K562 (cell line): ENCODE measurements at regions of chr5 and their contacts with region 1.

Region 1: GRCh38 chr5:140575309-140575708 is 10.7 kb downstream of the SLC35A4 start:
- DNase-seq: peak in 3 of 4 experiments; percentile 42 to 70 (median 61)
- ATAC-seq: peak; percentile 92
- H3K4me3 ChIP-seq: no peak overlapping the region
- H3K27ac ChIP-seq: no peak overlapping the region
- H3K4me1 ChIP-seq: peaks cover 8 to 10% of the 10 kb centered on the region in 2 experiments; a peak in 3 of 5 replicates
- H3K27me3 ChIP-seq: no peaks in the 10 kb centered on the region
- CTCF ChIP-seq: peak; percentile 74 to 95 (median 82)
- EP300 ChIP-seq: no peak
- POLR2A ChIP-seq: no peak
- RAD21 ChIP-seq: peak; percentile 36 to 86; a peak in 3 of 4 replicates

Region 2: GRCh38 chr5:139371482-139372435 is 1203.5 kb before region 1 on chr5:
- CTCF ChIA-PET with region 1: no interaction called
- POLR2A ChIA-PET with region 1: no interaction called
- in situ Hi-C with region 1: no loop called
- intact Hi-C with region 1: no loop called
- DNase-seq: no peak
- ATAC-seq: no peak
- H3K4me3 ChIP-seq: no peak overlapping the region
- H3K27ac ChIP-seq: no peak overlapping the region
- H3K4me1 ChIP-seq: no peaks in the 10 kb centered on the region
- H3K27me3 ChIP-seq: no peaks in the 10 kb centered on the region
- CTCF ChIP-seq: no peak
- EP300 ChIP-seq: no peak
- POLR2A ChIP-seq: no peak
- RAD21 ChIP-seq: no peak

Region 3: DNA sequence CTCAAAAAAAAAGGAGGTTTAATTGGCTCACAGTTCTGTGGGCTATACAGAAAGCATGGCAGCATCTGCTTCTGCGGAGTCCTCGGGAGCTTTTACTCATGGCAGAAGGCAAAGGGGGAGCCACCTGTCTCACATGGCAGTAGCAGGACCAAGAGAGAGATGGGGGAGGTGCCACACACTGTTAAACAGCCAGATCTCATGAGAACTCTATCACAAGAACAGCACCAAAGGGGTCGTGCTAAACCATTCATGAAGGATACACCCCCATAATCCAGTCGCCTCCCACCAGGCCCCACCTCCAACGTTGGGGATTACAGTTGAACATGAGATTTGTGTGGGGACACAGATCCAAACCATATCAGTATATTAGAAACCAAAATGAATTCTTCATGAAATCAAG is 955.4 kb before region 1 on chr5:
- CTCF ChIA-PET with region 1: no interaction called
- POLR2A ChIA-PET with region 1: no interaction called
- in situ Hi-C with region 1: no loop called
- intact Hi-C with region 1: no loop called
- DNase-seq: no peak
- ATAC-seq: no peak
- H3K4me3 ChIP-seq: no peak overlapping the region
- H3K27ac ChIP-seq: no peak overlapping the region
- H3K4me1 ChIP-seq: no peaks in the 10 kb centered on the region
- H3K27me3 ChIP-seq: no peaks in the 10 kb centered on the region
- CTCF ChIP-seq: no peak
- EP300 ChIP-seq: no peak
- POLR2A ChIP-seq: no peak
- RAD21 ChIP-seq: no peak

Region 4: GRCh38 chr5:140564196-140565023 is 10.9 kb before region 1 on chr5 and contains the starts of genes APBB3 and SLC35A4:
- CTCF ChIA-PET with region 1: no interaction called
- POLR2A ChIA-PET with region 1: interaction called, 12 read pairs
- in situ Hi-C with region 1: no loop called
- intact Hi-C with region 1: no loop called
- DNase-seq: peak; percentile 92 to 99 (median 94)
- ATAC-seq: peak; percentile 94
- H3K4me3 ChIP-seq: peak within 1 kb of the TSS; percentile 75
- H3K27ac ChIP-seq: peak within 1 kb of the TSS; percentile 98
- H3K4me1 ChIP-seq: peaks cover 26 to 40% of the 10 kb centered on the region in 2 experiments
- H3K27me3 ChIP-seq: no peaks in the 10 kb centered on the region
- CTCF ChIP-seq: 0 out of 6 replicates have a peak, but pooled peaks of 1 of the 3 experiments have one; percentile 12
- EP300 ChIP-seq: peak; percentile 58
- POLR2A ChIP-seq: peak; percentile 93
- RAD21 ChIP-seq: 0 out of 4 replicates have a peak, but pooled peaks of 1 of the 2 experiments have one; percentile 12
- polyA plus RNA-seq, gene APBB3: 0.17 to 0.67 TPM
- polyA plus RNA-seq, gene SLC35A4: 30.0 to 42.5 TPM

Region 5: DNA sequence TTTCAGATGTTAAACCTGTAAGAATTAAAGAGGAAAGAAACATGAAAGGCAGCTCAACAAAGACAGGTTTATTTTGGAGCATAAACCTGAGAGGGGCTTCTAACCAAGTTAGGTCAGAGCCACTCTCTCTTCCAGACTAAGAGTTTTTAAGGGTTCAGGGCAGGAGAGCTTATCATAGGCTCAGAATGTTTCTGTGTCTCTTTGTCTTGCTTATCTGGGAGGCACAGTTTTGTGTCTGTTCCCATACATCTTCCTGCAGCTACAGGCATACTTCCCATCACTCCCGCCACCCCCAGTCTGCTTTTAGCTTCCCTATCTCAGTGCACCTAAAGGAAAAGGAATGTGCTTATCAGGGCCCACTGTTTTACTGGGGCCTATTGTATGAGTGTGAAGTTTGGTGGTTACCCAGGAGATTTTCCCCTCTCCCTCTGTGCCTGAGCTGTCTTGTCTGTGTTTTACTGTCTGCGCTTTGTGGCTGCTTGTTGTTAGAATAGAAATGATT is 35.8 kb after region 1 on chr5:
- CTCF ChIA-PET with region 1: no interaction called
- POLR2A ChIA-PET with region 1: no interaction called
- in situ Hi-C with region 1: no loop called
- intact Hi-C with region 1: loop called (anchors 1 kb)
- DNase-seq: peak; percentile 57 to 90 (median 69)
- ATAC-seq: peak; percentile 94
- H3K4me3 ChIP-seq: no peak overlapping the region
- H3K27ac ChIP-seq: peak overlapping the region; percentile 9; the same call in 1 of the 3 replicates
- H3K4me1 ChIP-seq: peaks cover 7 to 8% of the 10 kb centered on the region in 2 experiments; a peak in 3 of 5 replicates
- H3K27me3 ChIP-seq: no peaks in the 10 kb centered on the region
- CTCF ChIP-seq: no peak
- EP300 ChIP-seq: peak; percentile 84
- POLR2A ChIP-seq: no peak
- RAD21 ChIP-seq: peak in 1 of 2 experiments; percentile 36; a peak in 2 of 4 replicates

Region 6: GRCh38 chr5:140700177-140701144 is 125.2 kb after region 1 on chr5 and contains the start of gene ZMAT2:
- CTCF ChIA-PET with region 1: no interaction called
- POLR2A ChIA-PET with region 1: no interaction called
- in situ Hi-C with region 1: no loop called
- intact Hi-C with region 1: no loop called
- DNase-seq: peak; percentile 94 to 97 (median 94)
- ATAC-seq: peak; percentile 99
- H3K4me3 ChIP-seq: peak within 1 kb of the TSS; percentile 87
- H3K27ac ChIP-seq: peak within 1 kb of the TSS; percentile 78
- H3K4me1 ChIP-seq: peaks cover 0 to 8% of the 10 kb centered on the region in 2 experiments; a peak in 2 of 5 replicates
- H3K27me3 ChIP-seq: no peaks in the 10 kb centered on the region
- CTCF ChIP-seq: no peak
- EP300 ChIP-seq: no peak
- POLR2A ChIP-seq: peak; percentile 93
- RAD21 ChIP-seq: no peak
- polyA plus RNA-seq, gene ZMAT2: 44.2 to 45.0 TPM

Region 7: DNA sequence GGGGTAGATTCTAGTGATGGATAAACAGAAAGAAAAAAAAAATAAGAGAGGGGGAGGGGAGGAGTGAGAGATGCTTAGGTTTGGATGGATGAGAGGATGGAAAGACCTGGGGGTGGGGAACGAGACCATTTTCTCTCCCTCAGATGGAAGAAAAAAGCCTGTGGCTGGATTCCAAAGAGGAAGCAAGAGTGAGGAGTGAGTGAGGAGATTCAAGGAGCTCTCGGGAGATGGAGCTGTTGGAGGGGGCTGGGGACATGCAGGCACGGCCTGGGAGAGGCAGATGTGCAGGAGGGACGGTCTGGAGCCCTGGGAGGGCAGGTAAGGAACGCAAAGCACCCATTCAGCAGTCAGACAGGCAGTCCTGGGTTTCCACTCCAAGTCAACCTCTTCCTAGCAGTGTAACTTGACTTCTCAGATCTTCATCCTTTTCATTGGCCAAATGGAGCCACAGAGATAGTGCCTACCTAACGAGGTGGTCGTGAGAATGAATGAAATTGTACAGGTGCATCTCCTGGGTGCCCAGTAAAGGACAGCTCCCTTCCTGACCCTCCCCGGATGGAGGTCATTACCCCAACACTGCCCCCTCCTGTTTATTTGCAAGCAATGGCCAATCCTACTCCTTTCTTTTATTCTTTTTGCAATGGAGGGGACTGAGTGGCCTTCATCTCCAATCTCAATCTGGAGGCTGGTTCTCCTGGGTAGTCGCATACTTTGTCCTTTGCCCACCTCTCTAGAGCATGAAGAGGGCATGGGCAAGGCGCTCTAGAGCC is 1250.7 kb after region 1 on chr5:
- CTCF ChIA-PET with region 1: no interaction called
- POLR2A ChIA-PET with region 1: no interaction called
- in situ Hi-C with region 1: no loop called
- intact Hi-C with region 1: no loop called
- DNase-seq: peak; percentile 56 to 74 (median 60)
- ATAC-seq: peak; percentile 80
- H3K4me3 ChIP-seq: no peak overlapping the region
- H3K27ac ChIP-seq: no peak overlapping the region
- H3K4me1 ChIP-seq: peaks cover 0 to 4% of the 10 kb centered on the region in 2 experiments; a peak in 1 of 5 replicates
- H3K27me3 ChIP-seq: peaks cover 12 to 34% of the 10 kb centered on the region in 2 experiments
- CTCF ChIP-seq: peak; percentile 53 to 75 (median 72)
- EP300 ChIP-seq: no peak
- POLR2A ChIP-seq: no peak
- RAD21 ChIP-seq: peak; percentile 45 to 67; a peak in 3 of 4 replicates